ENCODE measurements at regions of chr6 and their contacts with region 1.

Region 1: DNA sequence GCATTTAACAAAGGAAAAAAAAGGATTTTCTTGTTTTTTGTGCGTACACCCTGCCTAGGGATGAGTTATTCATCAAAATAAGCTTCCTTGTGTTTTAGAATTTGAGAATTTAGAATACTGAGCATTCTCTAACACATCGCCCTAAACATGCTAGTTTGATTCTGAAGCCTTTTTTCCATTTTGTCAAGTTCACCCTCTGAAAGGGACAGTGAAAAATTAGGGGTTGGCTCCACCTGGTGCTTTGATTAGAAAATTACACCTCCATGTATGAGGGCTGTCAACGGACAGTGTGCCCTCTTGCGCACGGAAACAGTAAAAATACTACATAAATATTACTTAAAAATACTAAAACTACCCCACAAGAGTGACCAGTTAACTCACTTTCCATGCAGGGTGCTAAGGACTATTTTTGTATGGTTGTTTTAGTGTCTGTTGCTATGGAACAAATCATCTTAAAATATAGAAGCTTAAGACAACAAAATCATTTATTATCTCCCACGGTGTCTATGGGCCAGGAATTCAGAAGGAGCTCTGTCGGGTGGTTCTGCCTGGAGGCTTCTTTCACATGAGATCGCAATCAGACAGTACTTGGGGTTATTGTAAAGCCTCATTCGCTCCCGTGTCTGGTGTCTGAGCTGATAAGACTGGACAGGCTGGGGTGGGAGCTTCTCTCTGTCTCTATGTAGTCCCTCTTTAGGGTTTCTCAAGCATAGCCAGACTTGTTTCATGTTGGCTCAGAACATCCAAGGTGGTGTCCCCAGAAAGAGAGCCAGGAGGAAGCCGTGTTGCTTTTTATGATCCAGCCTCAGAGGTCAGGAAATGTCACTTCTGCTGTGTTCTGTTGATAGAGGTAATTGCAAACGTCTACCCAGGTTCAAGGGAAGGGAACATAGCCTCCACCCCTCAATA is 41.1 kb upstream of the TMEM170B start:
- DNase-seq: peak; percentile 86
- H3K4me3 ChIP-seq: no peak overlapping the region
- H3K27ac ChIP-seq: no peak overlapping the region
- H3K4me1 ChIP-seq: no peaks in the 10 kb centered on the region
- H3K27me3 ChIP-seq: no peaks in the 10 kb centered on the region
- CTCF ChIP-seq: peak; percentile 92

Region 2: DNA sequence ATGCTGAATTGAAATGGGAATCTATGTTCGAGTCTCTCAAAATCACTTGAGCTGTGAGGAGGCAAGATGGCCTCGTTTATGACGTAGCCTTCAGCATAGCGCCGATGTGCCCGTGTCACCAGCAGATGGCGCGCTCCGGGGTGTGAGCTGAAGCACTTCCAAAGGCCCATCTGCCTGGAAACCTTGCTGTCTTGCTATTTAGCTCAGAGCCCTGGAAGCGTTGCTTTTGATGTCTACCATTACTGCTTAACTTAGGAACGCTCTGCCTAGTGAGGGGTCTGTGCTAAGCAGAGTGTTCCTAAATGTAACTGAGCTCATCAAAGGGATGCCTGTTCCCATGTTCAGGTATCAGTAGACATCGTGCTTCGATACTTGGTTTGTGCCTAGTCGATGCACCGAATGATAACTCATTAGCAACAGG is 541.8 kb before region 1 on chr6:
- CTCF ChIA-PET with region 1: interaction called, 7 read pairs
- POLR2A ChIA-PET with region 1: no interaction called
- intact Hi-C with region 1: loop called (anchors 1 kb)
- DNase-seq: peak; percentile 89
- H3K4me3 ChIP-seq: no peak overlapping the region
- H3K27ac ChIP-seq: no peak overlapping the region
- H3K4me1 ChIP-seq: no peaks in the 10 kb centered on the region
- H3K27me3 ChIP-seq: no peaks in the 10 kb centered on the region
- CTCF ChIP-seq: peak; percentile 97

Region 3: DNA sequence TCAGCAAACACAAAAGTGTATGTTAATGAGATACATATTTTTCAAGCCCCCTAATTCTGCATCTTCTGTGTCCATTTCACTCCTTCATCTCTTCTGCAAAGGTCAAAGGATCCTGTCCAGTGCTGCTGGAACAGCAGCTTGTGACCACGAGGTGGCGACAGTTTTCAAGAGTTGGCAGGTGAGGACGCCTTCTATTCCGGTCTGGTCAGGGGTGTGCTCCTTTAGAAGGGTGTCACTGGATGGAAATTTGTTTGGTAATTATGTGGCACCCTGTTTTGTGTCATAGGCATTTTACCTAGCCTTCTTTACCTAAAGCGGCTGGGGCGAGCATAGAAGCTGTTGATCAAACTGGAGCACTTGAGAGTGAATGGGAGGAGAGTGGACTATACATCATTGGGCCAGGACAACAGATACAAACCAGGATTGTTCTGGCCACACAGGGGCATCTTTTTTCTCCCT is 352.0 kb before region 1 on chr6:
- CTCF ChIA-PET with region 1: interaction called, 9 read pairs
- POLR2A ChIA-PET with region 1: no interaction called
- intact Hi-C with region 1: loop called (anchors 1 kb)
- DNase-seq: peak; percentile 72
- H3K4me3 ChIP-seq: no peak overlapping the region
- H3K27ac ChIP-seq: no peak overlapping the region
- H3K4me1 ChIP-seq: peaks cover 6% of the 10 kb centered on the region
- H3K27me3 ChIP-seq: no peaks in the 10 kb centered on the region
- CTCF ChIP-seq: peak; percentile 98

Region 4: GRCh38 chr6:11251541-11252360 is 244.7 kb before region 1 on chr6:
- CTCF ChIA-PET with region 1: no interaction called
- POLR2A ChIA-PET with region 1: no interaction called
- intact Hi-C with region 1: loop called (anchors 10 kb)
- DNase-seq: no peak
- H3K4me3 ChIP-seq: no peak overlapping the region
- H3K27ac ChIP-seq: no peak overlapping the region
- H3K4me1 ChIP-seq: no peaks in the 10 kb centered on the region
- H3K27me3 ChIP-seq: no peaks in the 10 kb centered on the region
- CTCF ChIP-seq: no peak

Region 5: DNA sequence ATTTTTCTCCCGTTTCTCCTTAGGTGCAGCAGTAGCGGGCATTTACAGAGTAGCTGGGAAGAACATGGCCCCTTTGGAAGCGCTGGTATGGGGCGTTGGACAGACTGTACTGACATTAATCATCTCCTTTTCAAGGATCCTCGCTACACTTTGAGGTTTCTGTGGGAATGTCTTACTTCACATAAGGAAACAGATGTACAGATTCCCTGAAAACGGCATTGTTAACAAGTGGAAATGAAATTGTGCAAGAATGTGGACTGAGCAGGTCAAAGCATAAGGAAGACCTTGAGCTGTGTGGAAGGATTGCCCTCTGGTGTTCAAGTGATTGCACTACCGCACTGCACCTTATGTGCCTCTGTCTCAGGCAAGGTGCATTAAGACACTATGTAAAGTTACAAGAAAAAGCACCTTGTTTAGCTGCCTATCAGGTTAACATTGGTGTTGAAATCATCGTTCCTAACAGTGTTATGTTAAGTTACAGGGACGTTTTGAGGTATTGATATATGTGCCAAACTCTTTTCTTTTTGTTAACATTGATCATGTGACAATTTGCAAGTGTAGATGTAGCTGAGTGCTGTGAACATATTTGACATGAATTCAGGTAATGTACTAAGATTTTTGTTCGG is 79.1 kb after region 1 on chr6:
- CTCF ChIA-PET with region 1: interaction called, 4 read pairs
- POLR2A ChIA-PET with region 1: no interaction called
- intact Hi-C with region 1: loop called (anchors 5 kb)
- DNase-seq: peak; percentile 80
- H3K4me3 ChIP-seq: no peak overlapping the region
- H3K27ac ChIP-seq: no peak overlapping the region
- H3K4me1 ChIP-seq: peaks cover 7% of the 10 kb centered on the region
- H3K27me3 ChIP-seq: no peaks in the 10 kb centered on the region
- CTCF ChIP-seq: peak; percentile 92

Measured in A673 (cell line).